Upper lobe of right lung (tissue), 1 donor: ENCODE measurements at regions of chr1 and their contacts with region 1.

Region 1: GRCh38 chr1:232629250-232630046 is 485 bp downstream of the SIPA1L2 start:
- DNase-seq: peak; percentile 77
- ATAC-seq: no peak
- H3K4me3 ChIP-seq: peak overlapping the region; percentile 81
- H3K27ac ChIP-seq: peak overlapping the region; percentile 66
- H3K4me1 ChIP-seq: peaks cover 41% of the 10 kb centered on the region
- H3K27me3 ChIP-seq: peaks cover 3% of the 10 kb centered on the region
- CTCF ChIP-seq: no peak

Region 2: DNA sequence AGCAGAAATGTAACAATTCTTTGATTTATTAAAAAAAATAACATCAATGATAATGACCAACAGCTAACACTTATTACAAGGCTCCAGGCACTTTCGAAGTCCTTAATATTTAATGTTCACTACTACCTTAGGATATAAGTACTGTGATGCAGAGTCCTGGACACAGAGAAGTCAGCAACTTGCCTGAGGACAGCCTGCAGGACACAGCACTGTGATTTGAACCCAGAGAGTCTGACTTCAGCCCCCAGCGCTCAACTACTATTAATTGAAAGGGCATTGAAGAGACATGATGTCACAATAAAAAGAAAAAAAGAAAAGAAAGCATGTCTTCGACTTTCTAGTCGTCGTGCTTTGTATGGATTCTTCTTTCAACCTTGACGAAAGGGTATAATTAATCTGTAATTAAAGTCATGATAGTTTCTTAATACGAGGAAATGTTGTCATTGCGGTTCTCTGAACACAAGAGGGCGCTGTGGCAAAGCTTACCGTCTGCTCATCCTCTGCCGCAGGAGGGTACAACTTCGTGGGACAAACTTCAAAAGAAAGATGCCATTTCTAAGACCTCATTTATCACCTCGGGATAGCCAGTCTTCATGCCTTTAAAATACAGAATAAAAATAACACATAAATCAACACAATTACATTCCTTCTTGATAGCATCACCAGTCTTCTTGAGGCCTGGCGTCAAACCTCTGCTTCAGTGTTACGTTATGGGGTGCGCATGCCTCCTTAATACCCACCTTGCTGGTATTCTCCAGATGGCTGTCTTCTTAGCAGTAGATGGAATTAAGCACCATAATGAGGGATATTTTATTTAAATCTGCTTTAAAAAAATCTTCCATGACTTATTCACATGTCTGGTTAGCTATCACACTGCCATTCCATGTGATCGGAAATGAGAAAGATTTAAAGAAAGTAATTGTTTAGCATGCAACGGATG is 762.8 kb before region 1 on chr1:
- intact Hi-C with region 1: loop called (anchors 10 kb)
- DNase-seq: no peak
- ATAC-seq: peak; percentile 73
- H3K4me3 ChIP-seq: no peak overlapping the region
- H3K27ac ChIP-seq: no peak overlapping the region
- H3K4me1 ChIP-seq: peaks cover 11% of the 10 kb centered on the region
- H3K27me3 ChIP-seq: no peaks in the 10 kb centered on the region
- CTCF ChIP-seq: peak; percentile 93

Region 3: DNA sequence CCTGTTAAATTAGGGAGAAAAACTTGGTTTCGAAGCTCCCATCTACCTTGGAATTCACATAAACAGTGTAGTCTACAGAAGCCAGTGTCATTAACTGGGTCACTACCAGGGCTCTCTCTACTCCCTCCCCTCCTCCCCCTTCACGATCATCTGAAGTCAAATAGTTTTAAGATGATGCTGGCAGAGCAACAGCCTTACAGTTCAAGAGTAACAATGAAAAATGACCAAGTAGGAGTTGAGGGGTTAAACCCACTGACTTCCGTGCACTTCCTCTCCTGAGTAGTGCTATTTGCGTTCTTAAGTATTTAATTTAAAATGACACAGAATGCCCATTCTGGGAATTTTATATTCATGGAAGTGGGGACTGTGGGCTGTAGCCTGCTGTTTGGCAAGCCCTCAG is 236.4 kb before region 1 on chr1:
- intact Hi-C with region 1: no loop called
- DNase-seq: no peak
- ATAC-seq: no peak
- H3K4me3 ChIP-seq: no peak overlapping the region
- H3K27ac ChIP-seq: no peak overlapping the region
- H3K4me1 ChIP-seq: no peaks in the 10 kb centered on the region
- H3K27me3 ChIP-seq: no peaks in the 10 kb centered on the region
- CTCF ChIP-seq: no peak

Region 4: GRCh38 chr1:232440325-232441035 is 189.0 kb before region 1 on chr1:
- intact Hi-C with region 1: loop called (anchors 10 kb)
- DNase-seq: no peak
- ATAC-seq: no peak
- H3K4me3 ChIP-seq: no peak overlapping the region
- H3K27ac ChIP-seq: no peak overlapping the region
- H3K4me1 ChIP-seq: no peaks in the 10 kb centered on the region
- H3K27me3 ChIP-seq: no peaks in the 10 kb centered on the region
- CTCF ChIP-seq: no peak